Right ventricle myocardium inferior (tissue), 1 donor: ENCODE measurements at regions of chr9 and their contacts with region 1.

Region 1: GRCh38 chr9:105881654-105882349 is 187.5 kb downstream of the TMEM38B start:
- DNase-seq: no peak
- ATAC-seq: no peak

Region 2: DNA sequence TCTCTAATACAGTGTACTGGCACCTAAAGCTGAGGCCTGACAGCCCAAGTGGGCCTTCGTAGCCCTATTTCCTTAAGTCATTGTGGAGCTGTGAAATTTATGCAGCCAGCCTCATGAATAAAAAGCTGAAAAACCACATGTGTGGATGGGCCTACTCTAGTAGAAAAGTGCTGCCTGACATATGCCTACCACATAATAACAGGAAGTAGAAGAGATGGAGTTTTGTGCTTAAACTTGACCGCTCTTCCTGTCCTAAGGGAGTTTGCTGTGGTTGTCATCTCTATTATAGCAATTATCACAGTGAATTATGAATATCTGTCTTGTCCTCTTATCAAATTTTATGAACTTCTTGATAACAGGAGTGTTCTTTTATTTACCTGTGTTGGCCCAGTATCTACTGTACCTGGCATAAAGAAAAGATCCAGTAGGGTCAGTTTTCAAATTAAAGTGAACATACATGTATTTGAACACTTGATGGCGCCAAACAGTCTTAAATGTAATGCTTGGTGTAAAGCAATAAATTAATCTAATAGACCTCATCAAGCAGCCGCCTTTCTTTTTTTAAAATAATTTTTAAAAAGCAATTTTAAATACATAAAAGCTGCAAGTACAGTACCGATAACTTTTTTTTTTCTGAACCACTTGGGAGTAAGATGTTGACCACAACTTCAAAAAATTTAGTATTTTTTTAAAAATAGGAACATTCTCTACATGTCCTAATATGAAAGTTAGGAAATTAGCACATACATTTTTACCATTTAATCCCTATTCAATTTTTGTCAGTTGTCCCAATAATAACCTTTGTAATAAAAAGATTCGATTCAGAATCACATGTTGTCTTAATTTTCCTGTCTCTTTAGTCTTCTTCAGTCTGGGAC is 272.8 kb before region 1 on chr9:
- intact Hi-C with region 1: loop called (anchors 2 kb)
- DNase-seq: no peak
- ATAC-seq: no peak

Region 3: GRCh38 chr9:105830461-105830860 is 51.3 kb before region 1 on chr9:
- intact Hi-C with region 1: no loop called
- DNase-seq: no peak
- ATAC-seq: no peak

Region 4: GRCh38 chr9:105842023-105842644 is 39.7 kb before region 1 on chr9:
- intact Hi-C with region 1: loop called (anchors 1 kb)
- DNase-seq: no peak
- ATAC-seq: no peak

Region 5: GRCh38 chr9:105930011-105930627 is 48.3 kb after region 1 on chr9:
- intact Hi-C with region 1: no loop called
- DNase-seq: no peak
- ATAC-seq: peak; percentile 89

Region 6: GRCh38 chr9:106035806-106036205 is 154.0 kb after region 1 on chr9:
- intact Hi-C with region 1: no loop called
- DNase-seq: no peak
- ATAC-seq: no peak

Region 7: GRCh38 chr9:106277966-106278365 is 396.2 kb after region 1 on chr9:
- intact Hi-C with region 1: no loop called
- DNase-seq: no peak
- ATAC-seq: no peak